ENCODE measurements at regions of chr14 and their contacts with region 1.

Region 1: DNA sequence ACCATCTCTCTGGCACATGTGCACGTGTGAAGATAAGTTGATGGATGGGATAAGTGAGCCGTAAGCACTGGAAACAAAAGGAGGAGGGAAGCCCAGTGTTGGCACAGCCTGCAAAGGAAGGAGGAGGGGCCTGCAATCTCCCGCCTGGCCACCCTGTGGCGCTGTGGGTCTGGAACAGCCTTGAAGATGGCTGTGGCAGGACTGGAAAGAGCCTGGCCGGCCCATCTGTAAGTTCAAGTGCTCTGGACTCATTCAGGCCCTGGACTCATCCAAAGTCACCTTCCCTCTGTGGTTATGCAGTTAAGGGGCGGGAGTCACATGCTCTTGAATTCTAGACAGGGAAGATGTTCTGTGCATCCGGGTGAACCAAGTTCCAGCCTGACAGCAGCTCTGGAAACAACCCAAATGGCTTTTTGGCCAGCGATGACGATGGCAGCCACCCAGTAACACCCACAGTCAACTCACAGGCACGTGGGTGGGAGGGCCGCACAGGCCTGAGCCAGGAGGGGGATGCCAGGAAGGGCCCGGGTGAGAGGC is 50.4 kb downstream of the CHGA start:
- DNase-seq: peak; percentile 73 to 100
- H3K4me3 ChIP-seq: no peak overlapping the region
- H3K27ac ChIP-seq: no peak overlapping the region
- H3K4me1 ChIP-seq: peaks cover 0 to 16% (median 8%) of the 10 kb centered on the region in 4 experiments; a peak in 5 of 7 replicates
- H3K27me3 ChIP-seq: no peaks in the 10 kb centered on the region
- CTCF ChIP-seq: peak; percentile 92 to 98 (median 98)
- EP300 ChIP-seq: peak in 1 of 2 experiments; percentile 95; a peak in 1 of 3 replicates
- POLR2A ChIP-seq: no peak
- RAD21 ChIP-seq: peak; percentile 92 to 93

Region 2: GRCh38 chr14:92960711-92961549 is 12.4 kb before region 1 on chr14:
- CTCF ChIA-PET with region 1: interaction called, 31 read pairs
- POLR2A ChIA-PET with region 1: no interaction called
- DNase-seq: no peak
- H3K4me3 ChIP-seq: no peak overlapping the region
- H3K27ac ChIP-seq: no peak overlapping the region; the same call in 1 of the 2 replicates
- H3K4me1 ChIP-seq: peaks cover 2 to 5% (median 4%) of the 10 kb centered on the region in 4 experiments; a peak in 3 of 7 replicates
- H3K27me3 ChIP-seq: no peaks in the 10 kb centered on the region
- CTCF ChIP-seq: no peak
- EP300 ChIP-seq: no peak
- POLR2A ChIP-seq: no peak
- RAD21 ChIP-seq: no peak

Region 3: DNA sequence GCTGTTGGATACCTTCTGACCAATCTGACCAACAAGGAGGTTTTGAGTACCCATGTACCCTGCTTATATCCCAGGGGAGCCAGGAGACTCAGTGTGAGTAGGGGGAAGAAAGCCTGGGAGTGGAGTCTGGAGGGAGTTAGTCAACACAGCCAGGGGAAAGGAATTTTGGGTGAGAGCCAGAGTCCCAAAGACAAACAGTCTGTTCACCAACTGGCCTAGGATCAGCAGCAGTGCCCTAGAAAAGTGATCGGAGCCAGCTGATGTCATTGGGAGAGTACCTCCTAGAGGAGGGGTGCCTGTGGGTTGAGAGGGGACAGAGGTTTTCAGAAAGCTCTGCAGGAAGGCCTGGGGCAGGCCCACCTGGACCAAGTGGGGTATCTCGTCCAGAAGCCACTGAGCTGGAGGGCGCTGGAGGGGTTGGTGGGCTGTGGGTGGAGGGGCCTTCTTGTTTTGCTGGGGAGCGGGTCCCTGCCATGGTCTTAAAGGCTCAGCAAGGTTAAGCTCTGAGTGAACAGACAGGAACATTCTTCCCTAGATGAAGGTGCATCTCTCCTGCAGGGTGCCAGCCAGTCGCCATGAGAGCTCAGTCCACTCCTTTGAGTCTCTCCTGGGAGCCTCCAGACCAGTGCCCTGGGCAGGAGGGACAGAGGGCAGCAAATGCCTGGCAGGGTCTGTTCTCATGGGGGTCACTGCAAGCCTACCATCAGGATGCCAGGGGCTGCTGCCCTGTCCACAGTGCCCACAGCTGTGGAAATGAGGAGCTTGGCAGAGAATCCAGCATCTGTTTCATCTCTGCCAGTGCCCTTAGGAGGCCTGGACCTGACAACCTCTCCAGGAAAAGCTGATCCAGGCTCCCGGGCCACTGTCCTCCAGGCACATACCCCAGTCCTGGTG is 13.2 kb after region 1 on chr14:
- CTCF ChIA-PET with region 1: interaction called, 13 read pairs
- POLR2A ChIA-PET with region 1: interaction called, 3 read pairs
- DNase-seq: no peak
- H3K4me3 ChIP-seq: no peak overlapping the region
- H3K27ac ChIP-seq: no peak overlapping the region
- H3K4me1 ChIP-seq: peaks cover 0 to 6% (median 0%) of the 10 kb centered on the region in 4 experiments; a peak in 1 of 7 replicates
- H3K27me3 ChIP-seq: no peaks in the 10 kb centered on the region
- CTCF ChIP-seq: no peak
- EP300 ChIP-seq: no peak
- POLR2A ChIP-seq: no peak
- RAD21 ChIP-seq: no peak

Region 4: GRCh38 chr14:92997343-92998061 is 24.2 kb after region 1 on chr14:
- CTCF ChIA-PET with region 1: interaction called, 30 read pairs
- POLR2A ChIA-PET with region 1: interaction called, 3 read pairs
- DNase-seq: no peak
- H3K4me3 ChIP-seq: no peak overlapping the region
- H3K27ac ChIP-seq: no peak overlapping the region
- H3K4me1 ChIP-seq: peaks cover 0 to 6% (median 0%) of the 10 kb centered on the region in 4 experiments; a peak in 2 of 7 replicates
- H3K27me3 ChIP-seq: no peaks in the 10 kb centered on the region
- CTCF ChIP-seq: no peak
- EP300 ChIP-seq: no peak
- POLR2A ChIP-seq: no peak
- RAD21 ChIP-seq: no peak

Measured in H1 (cell line).